AG04449 (cell line): ENCODE measurements at regions of chr6 and their contacts with region 1.

Region 1: DNA sequence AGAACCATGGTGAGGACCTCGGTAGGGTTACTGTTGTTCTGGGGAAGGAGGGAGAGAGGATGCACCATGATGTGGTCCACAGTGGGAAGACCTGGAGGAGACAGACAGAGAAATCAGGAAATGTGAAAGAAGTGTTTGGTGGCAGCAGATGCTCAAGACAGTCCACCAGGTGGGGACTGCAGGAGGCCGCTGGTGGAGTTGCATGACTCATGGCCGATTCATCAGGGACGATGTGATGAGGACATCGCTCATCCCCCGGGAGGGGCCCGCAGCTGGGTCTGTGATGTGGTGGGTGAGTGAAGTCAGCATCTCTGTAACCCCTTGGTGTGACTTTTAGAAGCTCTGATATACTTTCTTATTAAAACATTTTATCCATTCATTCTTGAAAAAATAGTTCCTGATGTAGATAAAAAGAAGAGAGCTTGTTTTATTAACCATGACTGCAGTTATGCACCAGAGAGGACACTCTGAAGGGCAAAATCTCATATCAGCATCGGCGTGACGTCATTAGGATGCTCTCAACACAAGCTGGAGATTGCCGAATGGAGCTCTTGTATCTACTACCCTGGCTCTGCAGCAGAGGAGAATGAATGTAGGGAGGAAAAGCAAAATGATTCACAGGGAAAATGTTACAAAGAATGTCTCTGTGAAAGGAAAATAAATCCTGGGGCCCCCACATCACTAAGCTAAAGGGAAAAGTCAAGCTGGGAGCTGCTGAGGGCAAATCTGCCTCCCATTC is 71.2 kb downstream of the RAMACL start:
- DNase-seq: peak; percentile 33
- H3K4me3 ChIP-seq: no peak overlapping the region
- CTCF ChIP-seq: peak; percentile 68

Region 2: GRCh38 chr6:166627033-166627874 is 112.0 kb after region 1 on chr6 and contains the start of gene RPS6KA2:
- CTCF ChIA-PET with region 1: interaction called, 10 read pairs
- POLR2A ChIA-PET with region 1: no interaction called
- DNase-seq: peak; percentile 96
- H3K4me3 ChIP-seq: peak within 1 kb of the TSS; percentile 80
- CTCF ChIP-seq: peak; percentile 24